ENCODE measurements at regions of chr4 and their contacts with region 1.

Region 1: GRCh38 chr4:26005764-26006163 is 91.7 kb downstream of the SMIM20 start:
- DNase-seq: no peak
- CTCF ChIP-seq: no peak

Region 2: GRCh38 chr4:26141911-26142638 is 136.3 kb after region 1 on chr4:
- CTCF ChIA-PET with region 1: no interaction called
- POLR2A ChIA-PET with region 1: no interaction called
- DNase-seq: no peak
- CTCF ChIP-seq: no peak

Region 3: DNA sequence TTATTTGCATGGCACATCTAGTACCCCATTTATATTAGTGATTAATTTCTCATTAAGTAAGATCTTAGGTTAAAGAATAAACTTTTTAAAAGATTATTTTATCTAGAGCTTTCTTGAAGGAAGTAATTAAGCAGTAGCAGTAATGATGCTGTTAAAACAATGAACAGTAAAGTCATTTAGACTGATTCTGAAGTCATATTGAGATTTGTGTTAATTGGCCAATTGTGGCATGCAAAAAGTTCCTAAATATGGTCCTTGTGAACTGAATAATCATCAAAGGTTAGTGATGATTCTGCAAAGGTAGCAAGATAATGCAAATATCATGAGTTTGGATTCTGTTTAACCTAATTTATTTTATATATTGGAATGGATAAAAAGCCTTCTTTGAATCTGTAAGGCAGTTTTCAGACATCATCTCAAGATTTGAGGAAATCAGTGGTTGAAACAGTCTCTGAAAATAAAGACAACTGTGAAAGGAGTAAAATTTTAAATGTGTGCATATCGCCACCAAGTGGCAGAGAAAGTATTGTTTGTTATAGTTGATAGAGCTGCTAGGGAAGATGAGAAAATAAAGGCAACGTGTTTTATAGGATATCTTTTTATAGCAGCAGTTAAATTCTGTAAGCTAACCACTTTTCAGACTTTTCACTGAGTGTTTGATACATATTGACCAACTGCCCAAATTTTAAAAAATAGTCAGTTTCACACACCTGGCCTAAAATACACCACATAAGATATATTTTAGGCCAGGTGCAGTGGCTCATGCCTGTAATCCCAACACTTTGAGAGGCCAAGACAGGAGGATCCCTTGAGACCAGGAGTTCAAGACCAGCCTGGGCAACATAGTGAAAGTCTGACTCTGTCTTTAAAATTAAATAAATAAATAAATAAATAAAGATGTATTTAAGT is 404.9 kb after region 1 on chr4:
- CTCF ChIA-PET with region 1: interaction called, 10 read pairs
- POLR2A ChIA-PET with region 1: no interaction called
- DNase-seq: peak; percentile 55
- CTCF ChIP-seq: peak; percentile 53

Measured in GM10248 (cell line).